HepG2 (cell line): ENCODE measurements at regions of chr17 and their contacts with region 1.

Region 1: DNA sequence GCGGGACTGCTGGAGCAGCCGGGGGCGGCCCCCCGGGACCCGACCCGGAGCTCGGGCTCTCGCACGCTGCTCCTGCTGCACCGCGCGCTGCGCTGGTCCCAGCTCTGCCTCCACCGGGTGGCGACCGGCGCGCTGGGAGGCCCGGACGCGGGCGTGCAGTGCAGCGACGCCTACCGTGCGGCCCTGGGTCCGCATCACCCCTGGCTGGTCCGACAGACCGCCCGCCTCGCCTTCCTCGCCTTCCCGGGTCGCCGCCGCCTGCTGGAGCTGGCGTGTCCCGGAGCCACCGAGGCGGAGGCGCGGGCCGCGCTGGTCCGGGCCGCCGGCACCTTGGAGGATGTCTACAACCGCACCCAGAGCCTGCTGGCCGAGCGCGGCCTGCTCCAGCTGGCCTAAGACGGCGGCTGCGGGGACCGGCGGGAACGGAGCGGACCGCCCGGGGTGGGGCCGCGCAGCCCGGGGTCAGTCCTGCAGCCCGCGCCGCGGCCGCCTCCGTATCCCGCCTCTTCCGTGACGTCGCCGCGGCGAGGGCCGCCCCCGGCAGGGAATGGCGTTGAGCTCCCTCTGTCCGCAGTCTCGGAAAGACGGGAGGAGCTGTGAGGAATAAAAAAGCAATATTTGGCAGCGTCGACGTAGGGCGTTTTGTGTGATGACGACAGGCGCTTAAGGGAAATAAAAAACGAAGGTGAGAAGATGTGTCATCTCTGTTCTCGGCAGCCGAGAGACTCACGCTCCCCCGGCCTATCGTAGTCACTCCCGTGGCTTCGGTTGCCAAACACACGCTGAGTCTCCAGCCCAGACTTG is 1.3 kb downstream of the GLTPD2 start:
- DNase-seq: peak; percentile 69
- ATAC-seq: peak; percentile 82
- H3K4me3 ChIP-seq: peak overlapping the region; percentile 89 to 94 (median 91)
- H3K27ac ChIP-seq: peak overlapping the region; percentile 96
- H3K4me1 ChIP-seq: peaks cover 28% of the 10 kb centered on the region
- H3K27me3 ChIP-seq: no peaks in the 10 kb centered on the region; a peak in 1 of 5 replicates
- CTCF ChIP-seq: peak; percentile 84
- EP300 ChIP-seq: no peak
- POLR2A ChIP-seq: peak; percentile 56 to 67; a peak in 3 of 4 replicates
- RAD21 ChIP-seq: peak; percentile 98

Region 2: GRCh38 chr17:4709794-4710692 is 80.1 kb before region 1 on chr17 and contains the start of gene ARRB2:
- CTCF ChIA-PET with region 1: interaction called, 11 read pairs
- POLR2A ChIA-PET with region 1: interaction called, 107 read pairs
- in situ Hi-C with region 1: no loop called
- intact Hi-C with region 1: loop called (anchors 1 kb)
- DNase-seq: peak; percentile 97
- ATAC-seq: peak; percentile 80
- H3K4me3 ChIP-seq: peak within 1 kb of the TSS; percentile 72 to 86 (median 85)
- H3K27ac ChIP-seq: peak within 1 kb of the TSS; percentile 65
- H3K4me1 ChIP-seq: peaks cover 43% of the 10 kb centered on the region
- H3K27me3 ChIP-seq: no peaks in the 10 kb centered on the region
- CTCF ChIP-seq: peak; percentile 85
- EP300 ChIP-seq: 0 out of 4 replicates have a peak, but pooled peaks of 1 of the 2 experiments have one; percentile 13
- POLR2A ChIP-seq: peak in 1 of 2 experiments; percentile 58; a peak in 3 of 4 replicates
- RAD21 ChIP-seq: peak; percentile 92
- total RNA-seq, gene ARRB2: 15.5 and 21.5 TPM in 2 replicates

Region 3: GRCh38 chr17:4733073-4733531 is 57.0 kb before region 1 on chr17:
- CTCF ChIA-PET with region 1: interaction called, 51 read pairs
- POLR2A ChIA-PET with region 1: interaction called, 110 read pairs
- in situ Hi-C with region 1: loop called (anchors 10 kb)
- intact Hi-C with region 1: loop called (anchors 1 kb)
- DNase-seq: peak; percentile 37
- ATAC-seq: peak; percentile 7; the same call in 2 of the 3 replicates
- H3K4me3 ChIP-seq: no peak overlapping the region
- H3K27ac ChIP-seq: peak overlapping the region; percentile 10
- H3K4me1 ChIP-seq: peaks cover 71% of the 10 kb centered on the region
- H3K27me3 ChIP-seq: no peaks in the 10 kb centered on the region; a peak in 1 of 5 replicates
- CTCF ChIP-seq: peak; percentile 60
- EP300 ChIP-seq: no peak
- POLR2A ChIP-seq: 0 out of 4 replicates have a peak, but pooled peaks of 1 of the 2 experiments have one; percentile 12
- RAD21 ChIP-seq: peak; percentile 46

Region 4: DNA sequence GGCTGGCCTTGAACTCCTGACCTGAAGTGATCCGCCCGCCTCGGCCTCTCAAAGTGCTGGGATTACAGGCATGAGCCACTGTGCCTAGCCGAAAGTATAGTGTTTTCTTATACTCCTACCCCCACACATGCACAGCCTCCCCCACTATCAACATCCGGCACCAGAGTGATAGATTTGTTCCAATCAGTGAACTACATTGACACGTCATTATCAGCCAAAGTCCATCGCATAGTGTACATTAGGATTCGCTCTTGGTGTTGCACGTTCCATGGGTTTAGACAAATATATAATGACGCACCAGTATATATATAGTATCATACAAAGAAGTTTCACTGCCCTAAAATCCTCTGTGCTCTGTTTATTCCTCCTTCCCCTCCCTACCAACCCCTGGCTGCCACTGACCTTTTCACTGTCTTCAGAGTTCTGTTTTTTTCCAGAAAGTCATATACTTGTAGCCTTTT is 30.3 kb before region 1 on chr17:
- CTCF ChIA-PET with region 1: no interaction called
- POLR2A ChIA-PET with region 1: interaction called, 8 read pairs
- in situ Hi-C with region 1: no loop called
- intact Hi-C with region 1: loop called (anchors 2 kb)
- DNase-seq: peak; percentile 100
- ATAC-seq: peak; percentile 98
- H3K4me3 ChIP-seq: no peak overlapping the region
- H3K27ac ChIP-seq: peak overlapping the region; percentile 95
- H3K4me1 ChIP-seq: peaks cover 66% of the 10 kb centered on the region
- H3K27me3 ChIP-seq: no peaks in the 10 kb centered on the region
- CTCF ChIP-seq: no peak
- EP300 ChIP-seq: peak; percentile 91 to 93
- POLR2A ChIP-seq: no peak
- RAD21 ChIP-seq: no peak; the same call in 1 of the 2 replicates

Region 5: DNA sequence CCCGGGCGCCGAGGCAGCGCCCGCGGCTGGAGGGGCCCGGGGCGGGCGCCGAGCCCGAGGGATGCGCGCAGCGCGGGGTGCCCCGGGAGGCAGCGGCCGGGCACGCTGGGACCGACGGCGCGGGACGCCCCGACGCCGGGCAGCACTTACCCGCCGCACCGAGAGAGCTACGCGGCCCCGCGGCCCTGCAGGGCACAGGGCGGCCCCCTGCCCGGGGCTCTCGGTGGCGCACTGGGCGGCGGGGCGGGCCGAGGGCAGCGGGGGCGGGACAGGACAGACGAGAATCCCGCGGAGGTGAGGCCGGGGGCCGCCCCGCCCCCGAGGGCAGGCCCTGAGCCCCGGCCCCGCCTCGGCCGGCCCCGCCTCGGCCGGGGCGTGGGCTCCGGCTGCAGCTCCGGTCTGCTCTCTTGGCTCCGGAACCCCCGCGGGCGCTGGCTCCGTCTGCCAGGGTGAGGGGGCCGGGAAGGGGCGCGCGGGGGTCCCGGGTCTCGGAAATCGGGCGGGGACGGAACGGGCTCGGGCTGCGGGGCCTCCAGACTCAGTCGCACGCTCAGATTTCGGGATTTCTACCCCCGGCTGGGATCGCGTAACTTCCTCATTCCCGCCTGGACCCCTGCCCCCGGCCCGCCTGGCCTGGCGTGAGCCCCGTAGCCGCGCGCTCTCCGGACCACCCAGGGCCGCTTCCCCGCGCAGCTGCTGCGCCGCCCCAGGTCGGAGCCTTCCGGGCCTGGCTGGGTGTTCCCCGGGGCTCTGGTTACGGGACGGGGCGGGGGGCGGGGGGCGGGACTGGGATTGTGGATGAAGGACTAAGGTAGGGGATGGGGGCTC is 16.9 kb after region 1 on chr17 and contains the start of gene PLD2:
- CTCF ChIA-PET with region 1: no interaction called
- POLR2A ChIA-PET with region 1: interaction called, 18 read pairs
- in situ Hi-C with region 1: no loop called
- intact Hi-C with region 1: no loop called
- DNase-seq: peak; percentile 69
- ATAC-seq: peak; percentile 97
- H3K4me3 ChIP-seq: peak within 1 kb of the TSS; percentile 80 to 96 (median 92)
- H3K27ac ChIP-seq: peak within 1 kb of the TSS; percentile 49
- H3K4me1 ChIP-seq: peaks cover 29% of the 10 kb centered on the region
- H3K27me3 ChIP-seq: no peaks in the 10 kb centered on the region
- CTCF ChIP-seq: no peak; the same call in 1 of the 2 replicates
- EP300 ChIP-seq: no peak
- POLR2A ChIP-seq: peak; percentile 74 to 81
- RAD21 ChIP-seq: peak; percentile 55; the same call in 1 of the 2 replicates
- total RNA-seq, gene PLD2: 7.8 and 13.4 TPM in 2 replicates

Region 6: DNA sequence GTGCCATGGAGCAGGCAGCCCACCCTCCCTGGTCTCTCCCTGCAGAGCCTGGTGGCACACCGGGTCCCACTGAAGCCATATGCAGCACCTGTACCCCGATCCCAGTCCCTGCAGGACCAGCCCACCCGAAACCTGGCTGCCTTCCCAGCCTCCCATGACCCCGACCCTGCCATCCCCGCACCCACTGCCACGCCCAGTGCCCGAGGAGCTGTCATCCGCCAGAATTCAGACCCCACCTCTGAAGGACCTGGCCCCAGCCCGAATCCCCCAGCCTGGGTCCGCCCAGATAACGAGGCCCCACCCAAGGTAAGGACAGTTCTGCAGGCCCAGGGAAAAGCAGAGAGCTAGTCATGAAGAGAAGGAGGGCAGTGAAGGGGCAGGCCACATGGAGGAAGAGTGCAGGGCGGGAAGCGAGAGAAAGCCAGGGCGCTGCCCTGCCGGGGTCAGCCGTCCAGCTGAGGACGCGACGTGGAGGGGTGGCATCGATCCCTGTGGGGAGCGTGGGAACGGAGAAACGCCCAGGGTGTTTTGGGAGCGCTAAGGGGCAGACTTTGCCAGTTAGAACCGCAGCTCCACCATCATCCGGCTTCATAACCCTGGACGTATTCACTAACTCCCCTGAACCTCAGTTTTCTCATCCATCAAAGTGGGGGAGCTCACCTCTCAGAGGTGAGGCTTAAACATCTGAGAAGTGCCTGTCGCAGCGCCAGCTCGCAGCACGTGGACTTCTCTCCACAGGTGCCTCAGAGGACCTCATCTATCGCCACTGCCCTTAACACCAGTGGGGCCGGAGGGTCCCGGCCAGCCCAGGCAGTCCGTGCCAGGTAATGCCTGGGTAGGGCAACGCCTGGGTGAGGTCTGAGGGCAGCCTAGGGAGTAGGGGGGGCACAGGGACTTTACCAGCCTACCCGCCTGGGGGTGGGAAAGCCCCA is 101.6 kb after region 1 on chr17:
- CTCF ChIA-PET with region 1: interaction called, 10 read pairs
- POLR2A ChIA-PET with region 1: no interaction called
- in situ Hi-C with region 1: no loop called
- intact Hi-C with region 1: loop called (anchors 1 kb)
- DNase-seq: no peak
- ATAC-seq: no peak
- H3K4me3 ChIP-seq: no peak overlapping the region
- H3K27ac ChIP-seq: no peak overlapping the region
- H3K4me1 ChIP-seq: no peaks in the 10 kb centered on the region
- H3K27me3 ChIP-seq: no peaks in the 10 kb centered on the region
- CTCF ChIP-seq: no peak
- EP300 ChIP-seq: no peak
- POLR2A ChIP-seq: no peak
- RAD21 ChIP-seq: no peak